Activated T-helper 2 cell treated with anti-CD3 and anti-CD28 coated beads, Interferon-gamma antibody, Interleukin-2, Interleukin-4, amounts not matched to agents 10 μg/mL and 5 μg/mL and 100 μg/mL, durations not matched to agents 14 hours and 24 hours and 36 hours (primary cell): ENCODE measurements at regions of chr3 and their contacts with region 1.

Region 1: GRCh38 chr3:20185701-20186598 is at the start of gene SGO1:
- DNase-seq: peak; percentile 99
- H3K4me3 Mint-ChIP-seq: no peak within 1 kb of the TSS
- H3K27ac Mint-ChIP-seq: no peak within 1 kb of the TSS
- H3K4me1 Mint-ChIP-seq: peaks cover 7% of the 10 kb centered on the region
- H3K27me3 Mint-ChIP-seq: peaks cover 4% of the 10 kb centered on the region
- total RNA-seq, gene SGO1: 19.2 and 20.8 TPM in 2 replicates

Region 2: DNA sequence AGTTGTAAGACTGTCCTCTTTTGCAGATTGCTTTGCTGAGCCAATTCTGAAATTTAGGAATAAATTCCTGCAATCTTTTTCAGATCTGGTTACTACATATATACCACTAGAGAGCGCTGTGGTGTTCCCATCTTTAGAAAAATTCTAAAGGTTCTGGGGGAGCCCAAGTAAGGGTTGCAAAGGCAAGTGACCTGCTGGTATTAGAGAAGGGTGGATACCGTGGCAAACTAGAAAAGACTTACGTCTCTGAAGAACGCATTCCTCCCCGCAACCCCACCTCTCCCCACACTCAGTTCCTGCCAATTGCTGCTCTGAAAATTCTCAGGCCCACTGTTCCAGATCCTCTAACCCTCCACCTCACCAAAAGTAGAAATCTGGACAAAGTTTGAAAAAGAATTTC is 300.5 kb before region 1 on chr3:
- intact Hi-C with region 1: loop called (anchors 2 kb)
- DNase-seq: no peak
- H3K4me3 Mint-ChIP-seq: no peak overlapping the region
- H3K27ac Mint-ChIP-seq: no peak overlapping the region
- H3K4me1 Mint-ChIP-seq: no peaks in the 10 kb centered on the region
- H3K27me3 Mint-ChIP-seq: peaks cover 7% of the 10 kb centered on the region

Region 3: GRCh38 chr3:19946832-19947548 is 239.0 kb before region 1 on chr3 and contains the start of gene RAB5A:
- intact Hi-C with region 1: loop called (anchors 1 kb)
- DNase-seq: peak; percentile 97
- H3K4me3 Mint-ChIP-seq: peak within 1 kb of the TSS; percentile 98
- H3K27ac Mint-ChIP-seq: peak within 1 kb of the TSS; percentile 98
- H3K4me1 Mint-ChIP-seq: peaks cover 29% of the 10 kb centered on the region
- H3K27me3 Mint-ChIP-seq: peaks cover 2% of the 10 kb centered on the region
- total RNA-seq, gene RAB5A: 43.5 and 49.5 TPM in 2 replicates

Region 4: DNA sequence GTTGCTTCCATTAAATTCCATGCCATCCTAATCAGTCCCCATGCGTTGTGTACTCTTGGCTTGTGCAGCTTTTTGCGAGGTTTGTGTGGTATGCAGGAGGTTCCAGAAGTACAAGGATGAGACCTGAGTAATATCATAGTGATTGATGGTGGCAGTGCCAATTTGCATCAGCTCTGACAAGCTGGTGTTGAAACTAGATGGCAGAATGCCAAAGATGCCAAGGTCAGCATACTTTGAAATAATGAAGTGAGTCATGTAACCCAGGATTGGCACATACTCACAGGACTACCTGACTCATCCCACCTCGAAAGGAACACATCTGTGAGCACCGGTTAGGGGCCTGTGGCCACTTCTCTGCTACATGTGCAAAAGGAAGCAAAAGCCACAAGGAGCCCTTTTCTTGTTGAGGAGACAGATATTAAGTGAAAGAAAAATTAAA is 131.4 kb before region 1 on chr3:
- intact Hi-C with region 1: loop called (anchors 5 kb)
- DNase-seq: peak; percentile 39
- H3K4me3 Mint-ChIP-seq: no peak overlapping the region
- H3K27ac Mint-ChIP-seq: no peak overlapping the region
- H3K4me1 Mint-ChIP-seq: peaks cover 25% of the 10 kb centered on the region
- H3K27me3 Mint-ChIP-seq: no peaks in the 10 kb centered on the region

Region 5: DNA sequence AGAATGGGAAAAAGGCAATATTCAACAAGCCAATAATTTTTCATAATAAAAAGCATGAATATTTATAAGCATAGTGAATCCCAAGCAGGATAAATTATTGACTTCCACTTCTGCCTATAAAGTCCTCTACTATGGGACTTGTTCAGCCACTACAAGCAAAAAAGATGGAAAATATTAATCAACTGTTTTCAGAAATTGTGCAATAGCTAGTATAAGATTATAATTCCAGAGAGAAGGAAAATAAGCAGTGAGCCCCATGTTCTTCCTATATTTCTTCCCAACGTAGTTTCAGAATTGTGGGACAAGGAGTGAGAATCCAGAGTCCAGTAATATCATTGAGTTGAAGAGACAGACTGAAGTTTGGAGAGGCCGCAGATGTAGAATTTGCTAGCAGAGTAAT is 24.2 kb before region 1 on chr3:
- intact Hi-C with region 1: loop called (anchors 2 kb)
- DNase-seq: no peak
- H3K4me3 Mint-ChIP-seq: no peak overlapping the region
- H3K27ac Mint-ChIP-seq: no peak overlapping the region
- H3K4me1 Mint-ChIP-seq: peaks cover 19% of the 10 kb centered on the region
- H3K27me3 Mint-ChIP-seq: no peaks in the 10 kb centered on the region

Region 6: GRCh38 chr3:20264934-20265567 is 79.1 kb after region 1 on chr3:
- intact Hi-C with region 1: no loop called
- DNase-seq: no peak
- H3K4me3 Mint-ChIP-seq: no peak overlapping the region
- H3K27ac Mint-ChIP-seq: no peak overlapping the region
- H3K4me1 Mint-ChIP-seq: no peaks in the 10 kb centered on the region
- H3K27me3 Mint-ChIP-seq: no peaks in the 10 kb centered on the region